Motor neuron (in vitro differentiated cells): ENCODE measurements at regions of chr9 and their contacts with region 1.

Region 1: GRCh38 chr9:114282926-114283325 is 40.0 kb upstream of the ORM1 start:
- ATAC-seq: peak in 7 of 8 experiments; percentile 25 to 82 (median 40)
- H3K4me3 ChIP-seq: no peak overlapping the region
- H3K27ac ChIP-seq: peak overlapping the region in 1 of 2 donors; percentile 36
- H3K4me1 ChIP-seq: peaks cover 28 to 31% of the 10 kb centered on the region in 2 donors

Region 2: DNA sequence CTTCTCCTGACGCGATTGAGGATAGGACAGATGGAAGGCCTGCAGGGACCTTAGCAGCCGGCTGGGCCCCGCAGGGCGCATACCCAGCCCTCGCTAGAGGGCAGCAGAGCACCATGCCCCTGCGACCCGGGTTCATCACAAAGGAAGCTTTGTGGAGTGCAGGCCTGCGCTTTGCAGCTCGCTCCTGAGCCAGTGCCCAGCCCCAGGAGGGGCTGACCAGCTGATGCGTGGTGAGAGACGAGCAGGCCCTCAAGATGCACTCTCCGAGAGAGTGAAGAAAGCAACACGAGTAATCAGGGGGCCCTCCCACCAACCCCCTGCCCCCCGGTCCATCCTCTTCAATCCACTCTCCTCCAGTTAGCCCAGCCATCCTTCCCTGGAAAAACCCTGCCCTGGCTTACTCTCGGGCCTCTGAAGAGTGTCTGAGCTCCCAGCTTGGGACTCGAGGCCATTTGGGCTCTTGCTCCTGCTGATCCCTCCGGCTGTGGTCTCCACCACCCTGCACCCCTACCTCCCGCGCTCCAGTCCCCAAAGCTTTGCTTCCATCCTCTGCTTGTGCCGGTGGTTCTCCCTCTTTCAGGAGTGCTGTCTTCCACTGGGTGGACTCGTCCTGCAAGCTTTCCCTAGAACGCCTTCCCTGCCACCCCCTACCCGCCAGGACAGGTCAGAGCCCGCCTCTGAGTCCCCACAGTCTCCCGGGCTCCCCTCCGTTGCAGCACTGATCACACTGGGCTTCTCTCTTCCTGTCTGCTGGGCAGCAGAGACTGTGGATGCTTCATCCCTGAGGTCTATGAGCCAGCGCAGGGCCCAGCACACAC is 174.7 kb before region 1 on chr9:
- in situ Hi-C with region 1: loop called in 5 of 9 experiments (anchors 10 to 25 kb)
- ATAC-seq: peak; percentile 78 to 100 (median 94)
- H3K4me3 ChIP-seq: no peak overlapping the region
- H3K27ac ChIP-seq: no peak overlapping the region
- H3K4me1 ChIP-seq: peaks cover 9 to 14% of the 10 kb centered on the region in 2 donors

Region 3: GRCh38 chr9:114518599-114519022 is 235.7 kb after region 1 on chr9:
- in situ Hi-C with region 1: no loop called
- ATAC-seq: no peak
- H3K4me3 ChIP-seq: no peak overlapping the region
- H3K27ac ChIP-seq: no peak overlapping the region
- H3K4me1 ChIP-seq: peaks cover 0 to 12% of the 10 kb centered on the region in 2 donors